ENCODE measurements at regions of chr3 and their contacts with region 1.

Region 1: GRCh38 chr3:165874663-165875489 is 37.7 kb upstream of the BCHE start:
- DNase-seq: no peak
- ATAC-seq: peak; percentile 60
- H3K4me3 ChIP-seq: no peak overlapping the region
- H3K27ac ChIP-seq: no peak overlapping the region
- H3K4me1 ChIP-seq: no peaks in the 10 kb centered on the region
- H3K27me3 ChIP-seq: no peaks in the 10 kb centered on the region
- CTCF ChIP-seq: no peak
- EP300 ChIP-seq: no peak
- POLR2A ChIP-seq: no peak
- RAD21 ChIP-seq: no peak

Region 2: DNA sequence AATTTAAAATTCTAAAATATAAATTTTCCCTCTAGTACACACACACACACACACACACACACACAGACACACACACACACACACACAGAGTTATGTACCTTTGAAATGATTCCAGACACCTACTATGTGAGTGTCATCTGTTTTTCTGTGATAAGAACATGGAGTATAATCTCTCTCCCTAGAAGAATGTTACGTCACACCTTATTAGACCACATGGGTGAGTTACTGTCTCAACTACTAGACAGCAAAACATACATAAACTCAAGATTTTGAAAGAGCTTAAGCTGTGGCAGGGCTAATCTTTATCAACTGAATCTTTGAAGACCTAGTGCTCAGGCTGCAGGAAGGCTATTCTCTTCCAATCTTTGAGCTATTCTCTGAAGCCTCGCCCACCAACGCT is 348.2 kb after region 1 on chr3:
- CTCF ChIA-PET with region 1: no interaction called
- POLR2A ChIA-PET with region 1: no interaction called
- RAD21 ChIA-PET with region 1: no interaction called
- SMC1A ChIA-PET with region 1: no interaction called
- in situ Hi-C with region 1: no loop called
- intact Hi-C with region 1: loop called (anchors 10 kb)
- DNase-seq: no peak
- ATAC-seq: no peak
- H3K4me3 ChIP-seq: no peak overlapping the region
- H3K27ac ChIP-seq: no peak overlapping the region
- H3K4me1 ChIP-seq: no peaks in the 10 kb centered on the region
- H3K27me3 ChIP-seq: no peaks in the 10 kb centered on the region
- CTCF ChIP-seq: no peak
- EP300 ChIP-seq: no peak
- POLR2A ChIP-seq: no peak
- RAD21 ChIP-seq: no peak

Measured in GM12878 (cell line).